GM10248 (cell line): ENCODE measurements at regions of chr3 and their contacts with region 1.

Region 1: DNA sequence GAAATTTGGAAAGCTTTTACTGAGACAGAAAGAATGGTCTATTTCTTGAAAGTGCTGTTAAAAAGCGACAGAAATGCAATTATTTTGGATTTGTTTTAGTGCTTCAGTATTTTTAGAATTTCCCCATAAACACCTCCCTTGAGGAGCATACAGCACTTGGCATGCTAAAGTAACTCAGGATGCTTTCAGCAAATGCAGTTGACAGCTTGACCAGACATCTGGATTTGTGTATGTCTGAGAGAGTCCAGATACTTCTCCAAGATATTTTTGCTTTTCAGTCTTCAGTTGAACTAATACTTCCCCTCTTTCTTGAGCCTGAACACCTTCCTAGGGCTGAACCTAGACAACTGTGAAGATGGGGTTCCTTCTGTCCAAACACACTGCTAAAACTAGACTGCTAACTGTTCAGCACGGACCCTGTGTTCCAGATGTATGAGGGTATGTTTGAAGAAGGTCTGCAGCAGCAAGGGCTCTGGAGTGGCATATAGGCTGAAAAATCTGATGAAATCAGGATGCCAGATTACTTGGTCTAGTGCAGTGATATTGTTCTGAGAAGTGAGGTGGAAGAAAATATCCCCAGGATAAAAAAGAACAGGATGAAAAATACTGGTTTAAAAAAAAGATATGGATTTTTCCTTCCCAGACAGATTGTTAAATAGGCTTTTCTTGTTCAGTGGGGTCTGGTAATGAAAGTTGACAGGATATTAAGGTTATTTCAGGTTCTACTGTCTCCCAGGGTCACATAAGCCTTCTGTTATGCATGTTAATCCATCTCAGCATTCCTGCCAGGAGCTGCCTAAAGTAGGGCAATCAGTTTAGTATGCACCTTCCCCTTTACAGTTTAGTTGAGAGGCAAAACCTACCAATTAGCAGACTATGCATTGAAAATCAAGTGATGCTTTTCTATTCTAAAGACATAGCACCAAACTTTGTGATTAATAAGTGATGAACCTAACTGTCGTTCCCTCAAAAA is 516.9 kb upstream of the TBL1XR1 start:
- DNase-seq: no peak
- CTCF ChIP-seq: no peak

Region 2: DNA sequence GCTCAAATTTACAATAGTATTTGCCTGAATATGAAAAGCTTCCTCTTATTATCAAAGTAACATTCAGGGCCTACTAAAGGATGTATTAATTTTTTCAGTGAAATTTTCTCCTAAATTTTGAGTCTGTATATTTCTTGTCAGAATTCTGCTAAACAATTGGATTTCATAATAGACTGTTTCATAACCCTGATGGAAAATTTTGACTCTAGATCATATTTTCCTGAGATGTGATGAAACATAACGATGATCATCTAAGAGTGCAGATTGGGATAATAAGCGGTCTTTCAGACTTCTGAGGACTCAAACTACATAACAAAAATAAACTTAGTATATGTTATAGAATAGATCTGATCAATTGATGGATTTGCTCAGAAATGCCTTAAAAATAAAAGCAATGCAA is 57.6 kb after region 1 on chr3:
- CTCF ChIA-PET with region 1: no interaction called
- POLR2A ChIA-PET with region 1: interaction called, 12 read pairs
- DNase-seq: no peak
- CTCF ChIP-seq: no peak